Dorsolateral prefrontal cortex (tissue), 120 donors: ENCODE measurements at regions of chr3 and their contacts with region 1.

Region 1: DNA sequence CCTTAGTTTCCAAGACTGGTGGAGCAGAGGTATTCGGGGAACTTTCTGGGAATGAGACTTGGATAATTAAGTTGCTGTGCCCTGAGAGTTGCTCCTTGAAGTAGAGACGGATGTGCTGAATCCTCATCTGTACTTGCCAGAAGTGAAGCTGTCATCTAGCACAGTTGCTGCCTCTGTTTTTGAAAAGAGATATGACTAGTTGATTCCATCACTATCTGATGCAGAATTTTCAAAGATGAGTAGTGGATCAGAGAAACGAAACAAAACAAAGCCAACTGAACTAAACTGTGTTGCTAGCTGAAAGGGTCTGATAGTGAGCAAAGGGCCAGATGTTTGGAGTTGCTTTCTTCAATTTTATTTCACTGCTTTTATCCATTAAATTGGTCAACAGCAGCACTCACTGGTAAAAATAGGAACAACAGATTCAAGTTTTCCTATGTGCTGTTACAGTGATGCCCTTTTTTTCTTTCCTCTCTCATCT is 52.7 kb downstream of the MITF start:
- DNase-seq: no peak
- H3K4me3 ChIP-seq: peak overlapping the region in 14 of 59 donors; percentile 3 to 40 (median 18)
- H3K27ac ChIP-seq: peak overlapping the region in 53 of 59 donors; percentile 8 to 86 (median 60)
- H3K27me3 ChIP-seq: no peaks in the 10 kb centered on the region
- CTCF ChIP-seq: peak in 55 of 56 donors; percentile 43 to 84 (median 65)

Region 2: DNA sequence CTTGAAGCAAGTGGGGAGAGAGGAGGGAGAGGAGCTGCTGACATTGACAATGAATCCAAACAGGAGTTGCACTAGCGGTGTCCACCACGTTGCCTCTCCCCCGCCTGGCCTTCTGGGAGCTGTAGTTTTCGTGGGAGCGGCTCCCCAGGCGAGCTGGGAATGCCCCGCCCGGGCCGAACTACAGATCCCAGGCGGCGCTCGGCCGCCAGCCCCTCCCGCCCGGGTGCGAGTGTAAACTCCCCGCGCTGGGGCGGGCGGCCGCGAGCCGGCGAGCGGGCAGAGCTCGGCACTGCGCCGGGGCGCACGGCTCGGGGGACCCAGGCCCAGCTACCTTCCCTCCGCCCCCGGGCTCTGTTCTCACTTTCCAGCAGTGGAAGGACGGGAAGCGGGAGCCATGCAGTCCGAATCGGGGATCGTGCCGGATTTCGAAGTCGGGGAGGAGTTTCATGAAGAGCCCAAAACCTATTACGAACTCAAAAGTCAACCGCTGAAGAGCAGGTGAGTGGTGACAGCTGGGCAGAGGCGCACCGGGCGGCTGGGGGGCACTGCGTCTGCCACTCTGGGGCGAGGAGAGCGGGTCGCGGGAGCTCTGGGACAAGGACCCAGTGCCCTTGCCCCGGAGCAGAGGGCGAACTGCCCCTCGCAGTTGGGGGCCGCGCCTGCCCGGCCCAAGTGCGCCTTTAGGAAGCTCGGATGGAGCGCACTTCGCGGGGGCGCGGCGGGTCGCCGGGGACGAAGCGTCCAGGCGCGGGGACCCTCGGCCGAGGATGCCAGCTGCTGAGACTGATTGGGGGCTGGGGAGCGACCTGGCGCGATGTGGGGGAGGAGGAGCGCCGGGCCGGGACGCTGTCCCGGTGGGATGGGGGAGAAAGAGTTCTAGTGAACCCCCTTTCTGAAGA is 52.5 kb before region 1 on chr3 and contains the start of gene MITF:
- intact Hi-C with region 1: loop called in 1 of 2 experiments (anchors 5 kb)
- DNase-seq: peak; percentile 79 to 96 (median 94)
- H3K4me3 ChIP-seq: peak within 1 kb of the TSS; percentile 60 to 99 (median 92)
- H3K27ac ChIP-seq: peak within 1 kb of the TSS in 53 of 59 donors; percentile 17 to 89 (median 75)
- H3K27me3 ChIP-seq: peaks cover 0 to 12% (median 0%) of the 10 kb centered on the region in 45 donors
- CTCF ChIP-seq: peak in 26 of 56 donors; percentile 11 to 51 (median 28)
- total RNA-seq, gene MITF: 4.7 to 23.9 (median 11.8) TPM

Region 3: GRCh38 chr3:69855436-69856162 is 63.6 kb after region 1 on chr3:
- intact Hi-C with region 1: loop called in 1 of 2 experiments (anchors 5 kb)
- DNase-seq: no peak
- H3K4me3 ChIP-seq: peak overlapping the region in 13 of 59 donors; percentile 8 to 47 (median 19)
- H3K27ac ChIP-seq: peak overlapping the region in 45 of 59 donors; percentile 1 to 79 (median 50)
- H3K27me3 ChIP-seq: no peaks in the 10 kb centered on the region
- CTCF ChIP-seq: peak; percentile 31 to 81 (median 60)

Region 4: DNA sequence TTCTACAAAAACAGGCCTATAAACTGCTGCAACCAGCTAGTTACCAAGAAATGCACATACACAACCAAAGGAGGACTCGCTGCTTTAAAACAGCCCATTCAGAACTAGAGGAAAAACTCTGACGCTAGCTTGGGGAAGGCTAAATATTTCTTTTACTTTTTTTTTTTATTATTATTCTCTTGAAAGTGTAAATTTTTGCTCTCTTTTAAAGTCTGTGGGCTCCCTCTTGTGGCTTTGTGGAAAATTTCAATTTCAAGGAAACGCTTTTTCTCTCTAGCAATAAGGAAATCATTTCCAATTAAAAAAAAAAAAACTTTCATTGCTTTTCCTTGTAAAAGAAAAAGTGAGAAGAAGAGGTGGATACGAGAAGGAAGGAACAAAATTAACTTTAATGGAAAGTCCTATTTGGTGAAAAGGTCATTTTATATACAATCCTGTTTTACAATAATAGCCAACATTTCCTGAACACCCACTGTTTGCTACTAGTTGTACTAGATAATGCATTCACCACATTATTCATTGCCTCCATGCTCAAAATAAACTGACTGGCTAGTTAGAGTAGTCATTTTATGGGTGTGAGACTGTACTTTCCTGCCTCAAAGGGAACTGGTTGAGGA is 156.4 kb after region 1 on chr3:
- intact Hi-C with region 1: loop called in 1 of 2 experiments (anchors 5 kb)
- DNase-seq: no peak
- H3K4me3 ChIP-seq: no peak overlapping the region
- H3K27ac ChIP-seq: peak overlapping the region in 55 of 59 donors; percentile 10 to 99 (median 91)
- H3K27me3 ChIP-seq: no peaks in the 10 kb centered on the region
- CTCF ChIP-seq: peak; percentile 61 to 91 (median 80)